Activated CD4-positive, alpha-beta T cell treated with anti-CD3 and anti-CD28 coated beads for 36 hours (primary cell): ENCODE measurements at regions of chr1 and their contacts with region 1.

Region 1: GRCh38 chr1:8026153-8026975 is at the start of gene ERRFI1:
- DNase-seq: peak; percentile 92
- ATAC-seq: peak; percentile 98
- H3K4me3 Mint-ChIP-seq: peak within 1 kb of the TSS; percentile 78
- H3K27ac Mint-ChIP-seq: peak within 1 kb of the TSS; percentile 67
- H3K4me1 Mint-ChIP-seq: peaks cover 13% of the 10 kb centered on the region
- H3K27me3 Mint-ChIP-seq: peaks cover 23% of the 10 kb centered on the region
- total RNA-seq, gene ERRFI1: 1.3 to 1.5 TPM

Region 2: GRCh38 chr1:7313081-7313546 is 713.2 kb before region 1 on chr1:
- CTCF ChIA-PET with region 1: no interaction called
- POLR2A ChIA-PET with region 1: no interaction called
- intact Hi-C with region 1: no loop called
- DNase-seq: no peak
- ATAC-seq: no peak
- H3K4me3 Mint-ChIP-seq: no peak overlapping the region
- H3K27ac Mint-ChIP-seq: no peak overlapping the region
- H3K4me1 Mint-ChIP-seq: no peaks in the 10 kb centered on the region
- H3K27me3 Mint-ChIP-seq: peaks cover 13% of the 10 kb centered on the region

Region 3: GRCh38 chr1:8015036-8015808 is 11.1 kb before region 1 on chr1:
- CTCF ChIA-PET with region 1: interaction called, 16 read pairs
- POLR2A ChIA-PET with region 1: no interaction called
- intact Hi-C with region 1: no loop called
- DNase-seq: peak; percentile 51
- ATAC-seq: peak; percentile 83
- H3K4me3 Mint-ChIP-seq: no peak overlapping the region
- H3K27ac Mint-ChIP-seq: no peak overlapping the region
- H3K4me1 Mint-ChIP-seq: peaks cover 2% of the 10 kb centered on the region
- H3K27me3 Mint-ChIP-seq: peaks cover 10% of the 10 kb centered on the region

Region 4: GRCh38 chr1:8047681-8048445 is 21.5 kb after region 1 on chr1:
- CTCF ChIA-PET with region 1: no interaction called
- POLR2A ChIA-PET with region 1: no interaction called
- intact Hi-C with region 1: loop called in 1 of 2 experiments (anchors 1 kb)
- DNase-seq: no peak
- ATAC-seq: no peak
- H3K4me3 Mint-ChIP-seq: no peak overlapping the region
- H3K27ac Mint-ChIP-seq: peak overlapping the region; percentile 57
- H3K4me1 Mint-ChIP-seq: peaks cover 25% of the 10 kb centered on the region
- H3K27me3 Mint-ChIP-seq: peaks cover 4% of the 10 kb centered on the region

Region 5: GRCh38 chr1:8154621-8155052 is 128.3 kb after region 1 on chr1:
- CTCF ChIA-PET with region 1: interaction called, 4 read pairs
- POLR2A ChIA-PET with region 1: interaction called, 3 read pairs
- intact Hi-C with region 1: loop called (anchors 1 to 5 kb)
- DNase-seq: no peak
- ATAC-seq: no peak
- H3K4me3 Mint-ChIP-seq: no peak overlapping the region
- H3K27ac Mint-ChIP-seq: no peak overlapping the region
- H3K4me1 Mint-ChIP-seq: peaks cover 46% of the 10 kb centered on the region
- H3K27me3 Mint-ChIP-seq: peaks cover 10% of the 10 kb centered on the region

Region 6: GRCh38 chr1:8169364-8170058 is 143.1 kb after region 1 on chr1:
- CTCF ChIA-PET with region 1: interaction called, 3 read pairs
- POLR2A ChIA-PET with region 1: no interaction called
- intact Hi-C with region 1: loop called (anchors 5 kb)
- DNase-seq: peak; percentile 65
- ATAC-seq: peak; percentile 86
- H3K4me3 Mint-ChIP-seq: peak overlapping the region; percentile 1
- H3K27ac Mint-ChIP-seq: peak overlapping the region; percentile 93
- H3K4me1 Mint-ChIP-seq: peaks cover 39% of the 10 kb centered on the region
- H3K27me3 Mint-ChIP-seq: no peaks in the 10 kb centered on the region

Region 7: DNA sequence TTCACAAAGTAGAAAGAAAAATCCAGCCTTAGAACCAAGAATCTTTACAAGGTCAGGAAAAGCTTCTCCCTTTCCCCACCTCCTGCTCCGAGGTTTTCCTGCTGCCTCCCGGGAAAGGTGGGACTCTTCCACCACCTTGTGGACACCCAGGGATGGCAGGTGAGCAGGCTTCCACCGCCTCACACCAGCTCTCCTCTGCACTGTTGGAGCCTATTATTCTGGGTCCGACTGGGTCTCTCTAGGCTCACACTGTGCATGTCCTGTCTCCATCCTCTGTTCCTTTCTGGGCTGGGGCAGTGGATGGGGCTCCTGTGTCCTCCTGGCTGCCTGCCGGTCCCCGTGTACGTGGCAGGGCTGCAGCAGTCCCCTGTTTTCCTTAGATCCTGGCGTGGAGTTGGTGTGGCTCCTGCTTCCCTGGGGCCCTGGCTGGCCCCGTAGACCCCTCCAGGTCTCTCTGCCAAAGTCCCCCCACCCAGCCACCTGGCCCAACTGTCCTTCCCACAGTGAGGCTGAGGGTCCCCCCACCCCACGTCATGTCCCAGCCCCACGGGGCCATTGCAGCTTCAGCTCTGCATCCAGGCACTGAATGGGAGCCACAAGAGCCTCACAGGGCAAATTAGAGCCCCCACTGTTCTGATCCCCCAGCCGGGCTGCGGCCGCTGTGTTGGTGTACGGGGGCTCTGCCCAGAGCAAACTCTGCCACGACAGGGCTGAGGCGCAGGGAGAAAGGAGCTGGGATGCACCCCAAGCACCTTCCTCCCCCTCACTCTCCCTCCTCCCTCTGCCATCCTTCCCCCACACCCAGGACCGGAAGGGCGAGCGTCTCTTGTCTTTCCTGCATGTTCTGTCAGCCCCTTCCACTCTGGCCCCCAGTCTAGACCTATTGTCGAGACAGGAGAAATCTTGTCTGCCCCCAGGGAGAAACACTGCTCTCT is 288.2 kb after region 1 on chr1:
- CTCF ChIA-PET with region 1: interaction called, 7 read pairs
- POLR2A ChIA-PET with region 1: no interaction called
- intact Hi-C with region 1: loop called (anchors 1 kb)
- DNase-seq: peak; percentile 73
- ATAC-seq: peak; percentile 51
- H3K4me3 Mint-ChIP-seq: no peak overlapping the region
- H3K27ac Mint-ChIP-seq: no peak overlapping the region
- H3K4me1 Mint-ChIP-seq: peaks cover 12% of the 10 kb centered on the region
- H3K27me3 Mint-ChIP-seq: peaks cover 27% of the 10 kb centered on the region